Activated B cell treated with CpG ODN at 0.5 μM for 24 hours (primary cell): ENCODE measurements at regions of chr7 and their contacts with region 1.

Region 1: DNA sequence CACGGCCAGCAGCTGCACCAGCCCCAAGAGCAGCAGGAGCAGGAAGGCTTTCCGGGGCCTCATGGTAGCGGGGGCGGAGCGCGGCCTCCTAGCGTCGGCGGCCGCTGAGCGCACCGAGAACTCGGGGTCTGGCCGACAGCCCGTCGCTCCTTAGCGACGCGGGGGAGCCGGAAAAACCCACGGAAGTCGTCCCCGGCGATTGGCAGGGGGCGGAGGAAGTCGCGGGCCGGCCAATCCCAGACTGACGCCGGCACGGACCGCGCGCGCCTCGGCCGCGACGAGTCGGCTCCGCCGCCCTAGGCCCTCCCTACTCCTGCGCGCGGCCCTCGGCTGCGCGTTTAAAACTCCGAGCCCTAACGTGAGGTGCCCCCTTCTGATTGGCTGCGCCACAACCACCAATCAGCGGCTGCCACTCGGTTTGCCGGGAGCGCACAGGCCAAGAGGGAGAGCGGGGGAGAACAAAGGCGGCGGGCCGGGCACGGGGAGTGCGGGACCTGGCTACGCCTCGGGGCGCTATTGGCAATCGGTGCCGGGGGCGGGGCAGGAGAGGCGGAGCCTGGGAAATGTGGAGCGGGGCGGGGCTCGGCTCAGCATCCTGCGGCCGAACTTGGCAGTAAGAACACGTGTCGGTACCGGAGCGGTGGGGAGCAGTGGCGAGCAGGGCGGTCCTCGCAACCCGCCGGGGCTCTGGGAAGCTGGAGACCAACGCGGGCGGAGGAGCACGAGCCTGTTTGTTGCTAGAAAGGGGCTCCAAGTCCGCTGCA is at the start of gene PDIA4:
- DNase-seq: peak; percentile 99
- ATAC-seq: peak; percentile 87
- H3K4me3 Mint-ChIP-seq: peak within 1 kb of the TSS; percentile 92
- H3K27ac Mint-ChIP-seq: peak within 1 kb of the TSS; percentile 89
- H3K4me1 Mint-ChIP-seq: peaks cover 39% of the 10 kb centered on the region
- H3K27me3 Mint-ChIP-seq: no peaks in the 10 kb centered on the region
- CTCF ChIP-seq: no peak
- total RNA-seq, gene PDIA4: 57.4 and 59.4 TPM in 2 replicates

Region 2: DNA sequence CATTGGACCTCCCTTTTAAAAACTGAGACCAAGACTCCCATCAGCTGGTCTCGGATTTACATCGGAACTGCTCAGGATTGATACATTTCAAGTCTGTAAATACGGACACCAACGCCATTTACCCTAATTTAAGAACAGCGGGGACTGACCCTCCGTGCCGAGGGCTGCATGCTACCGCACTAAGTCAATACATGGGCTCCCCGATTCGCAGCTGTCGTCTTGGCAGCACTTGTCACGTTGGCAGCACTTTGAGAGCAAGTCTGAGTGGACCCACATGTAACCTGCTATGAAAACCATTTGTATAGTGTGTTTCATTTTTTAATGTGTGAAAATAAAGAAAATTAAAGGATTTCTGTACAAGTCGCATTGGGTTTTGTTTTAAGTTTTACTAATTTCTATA is 227.9 kb before region 1 on chr7:
- CTCF ChIA-PET with region 1: no interaction called
- POLR2A ChIA-PET with region 1: no interaction called
- intact Hi-C with region 1: no loop called
- DNase-seq: no peak
- ATAC-seq: no peak
- H3K4me3 Mint-ChIP-seq: no peak overlapping the region
- H3K27ac Mint-ChIP-seq: no peak overlapping the region
- H3K4me1 Mint-ChIP-seq: no peaks in the 10 kb centered on the region
- H3K27me3 Mint-ChIP-seq: no peaks in the 10 kb centered on the region
- CTCF ChIP-seq: no peak

Region 3: GRCh38 chr7:148987010-148987750 is 41.3 kb before region 1 on chr7:
- CTCF ChIA-PET with region 1: no interaction called
- POLR2A ChIA-PET with region 1: interaction called, 5 read pairs
- intact Hi-C with region 1: loop called (anchors 1 kb)
- DNase-seq: peak; percentile 60
- ATAC-seq: peak; percentile 85
- H3K4me3 Mint-ChIP-seq: peak overlapping the region; percentile 96
- H3K27ac Mint-ChIP-seq: peak overlapping the region; percentile 93
- H3K4me1 Mint-ChIP-seq: peaks cover 50% of the 10 kb centered on the region
- H3K27me3 Mint-ChIP-seq: peaks cover 2% of the 10 kb centered on the region
- CTCF ChIP-seq: no peak

Region 4: DNA sequence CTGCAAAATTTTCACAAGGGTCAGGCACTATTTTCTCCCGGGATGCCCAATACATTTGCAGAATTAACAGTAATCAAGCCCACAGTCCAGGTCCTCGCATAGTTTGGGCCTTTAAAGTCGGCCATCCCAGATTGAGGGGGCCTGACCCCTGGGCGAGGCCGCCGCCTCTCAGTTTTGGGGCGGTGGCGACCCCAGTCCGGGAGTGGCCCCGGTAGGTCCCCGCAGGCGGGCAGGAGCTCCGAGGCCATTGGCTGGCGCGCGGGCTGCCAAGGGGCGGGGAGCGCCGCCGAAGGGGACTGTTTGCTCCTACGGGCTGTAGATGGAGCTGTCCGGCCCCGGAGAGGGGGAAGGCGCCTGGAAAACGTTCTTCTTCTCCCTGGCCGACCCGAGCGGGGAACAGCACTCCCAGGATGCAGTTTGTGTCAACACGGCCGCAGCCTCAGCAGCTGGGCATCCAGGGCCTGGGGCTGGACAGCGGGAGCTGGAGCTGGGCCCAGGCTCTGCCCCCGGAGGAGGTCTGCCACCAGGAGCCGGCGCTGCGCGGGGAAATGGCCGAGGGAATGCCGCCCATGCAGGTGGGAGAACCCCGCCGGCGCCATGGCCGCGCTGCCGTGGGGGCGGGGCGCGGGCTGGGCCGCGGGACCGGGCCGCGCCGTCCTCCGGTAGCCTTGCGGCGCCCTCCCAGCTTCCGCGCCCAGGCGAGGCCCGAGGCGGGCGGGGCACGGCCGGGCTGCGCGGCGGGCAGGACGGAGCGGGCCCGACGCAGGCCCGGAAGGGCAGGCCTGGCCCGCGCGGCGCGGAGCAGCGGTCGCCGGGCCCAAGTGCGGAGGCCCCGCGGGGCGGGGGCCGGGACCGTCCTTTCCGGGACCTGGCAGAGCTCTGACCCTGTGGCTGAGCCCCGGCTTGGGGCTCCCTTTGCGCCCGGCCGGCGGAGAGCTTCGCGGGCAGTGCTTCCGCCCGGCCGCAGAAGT is 166.9 kb after region 1 on chr7 and contains the start of gene ZNF282:
- CTCF ChIA-PET with region 1: no interaction called
- POLR2A ChIA-PET with region 1: no interaction called
- intact Hi-C with region 1: loop called (anchors 2 kb)
- DNase-seq: peak; percentile 68
- ATAC-seq: peak; percentile 88
- H3K4me3 Mint-ChIP-seq: peak within 1 kb of the TSS; percentile 89
- H3K27ac Mint-ChIP-seq: peak within 1 kb of the TSS; percentile 66
- H3K4me1 Mint-ChIP-seq: peaks cover 31% of the 10 kb centered on the region
- H3K27me3 Mint-ChIP-seq: no peaks in the 10 kb centered on the region
- CTCF ChIP-seq: no peak
- total RNA-seq, gene ZNF282: 21.6 and 21.7 TPM in 2 replicates